ENCODE measurements at regions of chr5 and their contacts with region 1.

Region 1: DNA sequence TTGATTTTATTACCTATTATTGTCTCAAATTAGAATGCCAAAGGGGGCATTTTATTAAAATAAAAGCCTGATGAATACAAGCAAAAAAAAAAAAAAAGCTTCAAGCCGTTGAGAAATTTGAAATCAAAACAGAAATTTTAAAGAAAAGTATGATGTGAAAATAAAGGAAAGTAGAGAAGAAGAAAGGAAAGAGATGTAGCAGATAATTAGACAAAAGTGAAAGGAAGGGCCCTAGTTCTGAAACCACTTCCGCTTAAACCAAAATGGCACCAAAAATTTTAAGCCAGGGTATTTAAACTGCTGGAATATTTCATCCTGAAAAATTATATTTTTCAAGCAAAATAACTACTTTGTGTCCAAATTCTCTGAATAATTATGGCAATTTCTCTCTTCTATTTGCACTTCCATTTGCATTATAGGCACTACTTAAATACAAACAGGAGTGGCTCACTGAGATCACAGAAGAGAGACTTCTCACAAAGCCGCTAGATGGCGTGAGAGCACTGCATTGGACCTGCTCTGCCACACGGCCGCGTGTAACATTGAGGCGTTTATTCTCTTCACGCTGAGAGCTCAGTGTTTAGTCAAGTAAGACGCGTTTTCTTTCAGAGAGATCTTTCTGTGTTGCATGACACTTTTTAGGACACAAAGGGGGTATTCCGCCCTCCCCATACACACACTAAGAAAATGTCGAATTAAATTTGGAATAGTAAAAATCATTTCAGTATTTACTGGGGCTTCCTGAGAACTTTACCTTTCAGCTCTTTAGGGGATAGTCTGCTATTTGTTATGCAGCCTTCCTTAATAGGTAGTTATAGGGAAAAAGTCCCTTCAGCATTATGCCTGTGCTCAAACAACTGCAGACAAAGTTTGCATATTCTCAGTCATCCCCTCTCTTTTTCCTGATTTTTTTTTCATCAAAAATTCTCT is 368.4 kb upstream of the CCNH start:
- DNase-seq: peak; percentile 74
- H3K4me3 ChIP-seq: no peak overlapping the region
- H3K27ac ChIP-seq: no peak overlapping the region
- H3K4me1 ChIP-seq: no peaks in the 10 kb centered on the region
- H3K27me3 ChIP-seq: peaks cover 0 to 20% of the 10 kb centered on the region in 2 experiments
- CTCF ChIP-seq: peak; percentile 80 to 82
- POLR2A ChIP-seq: no peak

Region 2: GRCh38 chr5:87770601-87771121 is 10.4 kb before region 1 on chr5:
- CTCF ChIA-PET with region 1: interaction called, 19 read pairs
- POLR2A ChIA-PET with region 1: no interaction called
- dilution Hi-C with region 1: no loop called
- intact Hi-C with region 1: no loop called
- DNase-seq: no peak
- H3K4me3 ChIP-seq: no peak overlapping the region
- H3K27ac ChIP-seq: no peak overlapping the region
- H3K4me1 ChIP-seq: no peaks in the 10 kb centered on the region
- H3K27me3 ChIP-seq: peaks cover 4 to 5% of the 10 kb centered on the region in 2 experiments
- CTCF ChIP-seq: no peak
- POLR2A ChIP-seq: no peak

Region 3: GRCh38 chr5:88140856-88141752 is 360.0 kb after region 1 on chr5:
- CTCF ChIA-PET with region 1: interaction called, 5 read pairs
- POLR2A ChIA-PET with region 1: no interaction called
- dilution Hi-C with region 1: no loop called
- intact Hi-C with region 1: loop called (anchors 5 kb)
- DNase-seq: peak; percentile 96
- H3K4me3 ChIP-seq: peak overlapping the region; percentile 31 to 75 (median 38)
- H3K27ac ChIP-seq: no peak overlapping the region
- H3K4me1 ChIP-seq: peaks cover 12% of the 10 kb centered on the region
- H3K27me3 ChIP-seq: peaks cover 58 to 78% of the 10 kb centered on the region in 2 experiments
- CTCF ChIP-seq: peak; percentile 55 to 82
- POLR2A ChIP-seq: no peak

Region 4: GRCh38 chr5:88680253-88681132 is 899.4 kb after region 1 on chr5:
- CTCF ChIA-PET with region 1: interaction called, 120 read pairs
- POLR2A ChIA-PET with region 1: no interaction called
- dilution Hi-C with region 1: no loop called
- intact Hi-C with region 1: loop called (anchors 1 kb)
- DNase-seq: peak; percentile 37
- H3K4me3 ChIP-seq: peak overlapping the region in 1 of 3 experiments; percentile 34
- H3K27ac ChIP-seq: no peak overlapping the region
- H3K4me1 ChIP-seq: peaks cover 8% of the 10 kb centered on the region
- H3K27me3 ChIP-seq: peaks cover 83 to 99% of the 10 kb centered on the region in 2 experiments
- CTCF ChIP-seq: peak; percentile 90 to 97
- POLR2A ChIP-seq: no peak

Region 5: DNA sequence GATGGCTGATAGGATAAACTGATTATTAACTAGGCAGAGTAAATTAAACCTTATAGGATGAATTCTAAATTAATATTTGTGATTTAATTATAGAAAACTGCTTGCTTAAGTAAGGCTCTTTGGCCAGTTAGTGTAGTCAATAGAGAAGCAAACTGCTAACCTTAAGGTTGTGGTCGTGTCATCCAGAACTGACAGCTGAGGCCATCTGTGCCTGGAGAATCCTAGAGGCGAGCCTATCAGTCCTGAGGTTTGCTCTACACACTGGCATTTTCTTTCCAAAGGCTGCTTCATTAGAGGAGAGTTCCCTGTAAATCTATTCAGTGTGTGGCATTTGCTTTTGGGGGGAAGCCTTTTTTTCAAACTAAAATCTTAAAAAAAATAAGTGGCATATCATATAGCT is 932.7 kb after region 1 on chr5:
- CTCF ChIA-PET with region 1: interaction called, 28 read pairs
- POLR2A ChIA-PET with region 1: no interaction called
- dilution Hi-C with region 1: no loop called
- intact Hi-C with region 1: no loop called
- DNase-seq: no peak
- H3K4me3 ChIP-seq: no peak overlapping the region
- H3K27ac ChIP-seq: no peak overlapping the region
- H3K4me1 ChIP-seq: no peaks in the 10 kb centered on the region
- H3K27me3 ChIP-seq: peaks cover 0 to 2% of the 10 kb centered on the region in 2 experiments
- CTCF ChIP-seq: no peak
- POLR2A ChIP-seq: no peak

Measured in endothelial cell of umbilical vein (primary cell).